Activated T-helper 2 cell treated with anti-CD3 and anti-CD28 coated beads, Interferon-gamma antibody, Interleukin-2, Interleukin-4, amounts not matched to agents 10 μg/mL and 5 μg/mL and 100 μg/mL, durations not matched to agents 14 hours and 24 hours and 36 hours (primary cell): ENCODE measurements at regions of chr17 and their contacts with region 1.

Region 1: DNA sequence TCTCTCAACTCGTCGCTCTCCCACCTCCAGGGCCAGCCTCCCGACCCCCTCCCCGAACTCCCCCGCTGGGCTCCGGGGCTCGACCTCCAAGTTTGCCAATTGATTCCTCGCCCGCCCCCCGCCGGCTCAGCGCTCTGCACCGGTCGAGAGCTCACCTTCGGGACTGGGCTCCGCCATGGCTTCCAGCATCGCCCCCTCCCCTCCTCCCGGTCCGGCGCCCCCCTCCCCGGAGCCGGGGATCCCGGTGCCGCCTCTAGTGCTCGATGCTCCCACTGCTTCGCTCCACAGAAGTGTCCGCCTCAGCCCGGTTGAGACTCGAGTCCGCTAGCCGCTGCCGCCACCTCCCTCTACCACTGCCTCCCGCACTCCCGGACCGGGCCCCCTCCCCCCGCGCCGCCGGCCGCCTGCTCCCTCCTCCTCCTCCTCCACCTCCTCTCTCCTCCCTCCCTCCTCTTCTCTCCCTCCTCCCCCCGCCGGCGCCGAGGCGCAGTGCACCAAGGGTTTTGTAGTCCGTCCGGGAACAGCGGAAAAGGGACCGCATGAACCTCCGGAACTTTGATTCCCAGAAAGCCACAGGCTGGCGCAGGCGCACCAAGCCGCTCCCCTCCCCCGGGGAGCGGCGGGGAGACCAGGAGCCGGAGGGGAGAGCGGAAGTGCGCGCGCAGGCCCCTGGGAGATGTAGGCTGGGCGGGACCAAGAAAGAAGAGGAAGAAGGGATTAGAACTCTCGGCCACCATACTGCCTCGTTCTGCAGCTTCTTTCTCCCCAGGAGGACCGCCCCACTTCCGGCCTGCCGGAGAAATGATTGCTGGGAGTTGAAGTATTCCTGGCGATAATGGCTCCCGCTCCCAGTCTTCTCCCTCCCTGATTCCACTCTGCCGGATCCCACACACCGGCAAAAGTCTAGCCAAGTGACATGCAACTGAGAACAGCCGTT is at the start of gene PHF23:
- DNase-seq: peak; percentile 98
- H3K4me3 Mint-ChIP-seq: peak within 1 kb of the TSS; percentile 98
- H3K27ac Mint-ChIP-seq: peak within 1 kb of the TSS; percentile 92
- H3K4me1 Mint-ChIP-seq: peaks cover 48% of the 10 kb centered on the region
- H3K27me3 Mint-ChIP-seq: no peaks in the 10 kb centered on the region
- total RNA-seq, gene PHF23: 43.4 and 47.8 TPM in 2 replicates

Region 2: DNA sequence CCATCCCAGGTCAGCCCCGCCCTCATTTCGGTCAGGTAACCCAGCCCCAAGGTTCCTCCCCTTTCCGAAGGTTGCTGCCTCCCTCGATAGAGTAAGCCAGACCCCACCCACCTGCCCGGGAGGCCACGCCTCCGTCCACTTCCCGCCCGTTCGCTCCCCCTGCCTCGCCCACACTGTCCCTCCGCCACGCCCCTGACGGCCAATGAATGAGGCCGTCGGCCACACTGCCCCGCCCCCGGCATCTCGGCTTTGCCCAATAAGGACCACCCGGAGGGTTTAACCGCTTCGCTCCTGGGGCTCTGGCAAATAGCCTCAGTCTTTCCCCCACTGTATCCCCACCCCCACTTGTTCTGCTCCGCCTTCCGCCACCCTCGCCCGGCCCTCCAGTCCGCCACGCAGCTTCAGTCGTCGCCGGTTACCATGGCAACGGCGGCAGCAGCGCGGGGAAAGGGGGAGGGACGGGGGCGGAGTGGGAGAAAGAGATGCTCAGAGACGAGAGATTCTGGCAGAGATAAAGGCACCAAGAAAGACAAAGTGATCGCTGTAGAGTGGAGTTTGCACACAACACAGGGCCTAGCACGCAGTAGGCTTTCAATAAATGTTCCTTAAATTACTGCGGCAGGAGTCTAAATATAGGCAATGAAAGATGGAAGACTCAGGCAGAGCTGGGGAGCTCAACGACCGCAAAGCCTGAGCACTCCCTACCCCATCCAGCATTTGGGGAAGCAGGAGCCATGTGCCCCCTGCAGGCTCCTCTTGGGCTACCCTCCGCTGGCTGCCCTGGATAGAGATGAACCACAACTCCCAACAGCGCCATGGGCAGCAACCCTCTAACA is 24.8 kb before region 1 on chr17:
- intact Hi-C with region 1: loop called (anchors 1 kb)
- DNase-seq: peak; percentile 99
- H3K4me3 Mint-ChIP-seq: peak overlapping the region; percentile 85
- H3K27ac Mint-ChIP-seq: peak overlapping the region; percentile 93
- H3K4me1 Mint-ChIP-seq: peaks cover 48% of the 10 kb centered on the region
- H3K27me3 Mint-ChIP-seq: peaks cover 15% of the 10 kb centered on the region

Region 3: GRCh38 chr17:7226723-7227396 is 12.5 kb before region 1 on chr17:
- intact Hi-C with region 1: no loop called
- DNase-seq: no peak
- H3K4me3 Mint-ChIP-seq: no peak overlapping the region
- H3K27ac Mint-ChIP-seq: no peak overlapping the region
- H3K4me1 Mint-ChIP-seq: peaks cover 6% of the 10 kb centered on the region
- H3K27me3 Mint-ChIP-seq: no peaks in the 10 kb centered on the region

Region 4: DNA sequence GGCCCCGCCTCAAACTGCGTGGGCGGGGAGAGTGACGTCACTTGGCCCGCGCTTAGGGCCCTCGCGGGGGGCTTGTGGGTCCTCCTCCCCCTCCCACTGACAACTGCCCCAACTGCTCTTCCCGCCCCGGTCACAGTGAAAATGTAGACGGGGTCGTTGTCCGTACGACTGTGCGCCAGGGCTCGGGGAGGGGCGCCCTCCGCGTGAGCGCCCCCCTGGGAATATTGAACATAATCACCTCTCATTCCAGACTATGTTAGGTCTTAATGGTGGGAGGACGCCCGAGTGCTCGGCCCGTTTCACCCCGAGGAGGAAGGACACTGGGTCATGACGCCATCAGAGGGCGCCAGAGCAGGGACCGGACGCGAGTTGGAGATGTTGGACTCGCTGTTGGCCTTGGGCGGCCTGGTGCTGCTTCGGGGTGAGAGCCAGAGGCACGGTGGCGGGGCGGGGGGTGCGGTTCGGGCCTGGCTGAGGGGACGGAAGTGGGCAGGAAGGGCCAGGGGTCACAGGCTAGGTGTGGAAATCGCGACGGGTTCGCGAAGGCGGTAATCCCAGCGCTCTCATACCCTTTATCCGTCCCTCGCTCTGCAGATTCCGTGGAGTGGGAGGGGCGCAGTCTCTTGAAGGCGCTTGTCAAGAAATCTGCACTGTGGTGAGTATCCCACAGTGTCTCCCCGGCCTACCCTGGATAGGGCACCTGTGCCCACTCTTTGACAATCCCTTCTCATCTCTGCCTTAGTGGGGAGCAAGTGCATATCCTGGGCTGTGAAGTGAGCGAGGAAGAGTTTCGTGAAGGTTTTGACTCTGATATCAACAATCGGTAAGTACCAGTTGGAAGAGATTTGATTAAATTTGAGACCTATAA is 13.1 kb after region 1 on chr17 and contains the start of gene ELP5:
- intact Hi-C with region 1: loop called (anchors 1 kb)
- DNase-seq: peak; percentile 88
- H3K4me3 Mint-ChIP-seq: peak within 1 kb of the TSS; percentile 92
- H3K27ac Mint-ChIP-seq: peak within 1 kb of the TSS; percentile 98
- H3K4me1 Mint-ChIP-seq: peaks cover 33% of the 10 kb centered on the region
- H3K27me3 Mint-ChIP-seq: no peaks in the 10 kb centered on the region
- total RNA-seq, gene ELP5: 64.8 and 65.3 TPM in 2 replicates

Region 5: GRCh38 chr17:7263083-7264078 is 24.0 kb after region 1 on chr17:
- intact Hi-C with region 1: no loop called
- DNase-seq: no peak
- H3K4me3 Mint-ChIP-seq: peak overlapping the region; percentile 47
- H3K27ac Mint-ChIP-seq: no peak overlapping the region
- H3K4me1 Mint-ChIP-seq: peaks cover 16% of the 10 kb centered on the region
- H3K27me3 Mint-ChIP-seq: peaks cover 29% of the 10 kb centered on the region

Region 6: GRCh38 chr17:7280519-7281429 is 41.4 kb after region 1 on chr17:
- intact Hi-C with region 1: loop called (anchors 1 kb)
- DNase-seq: peak; percentile 69
- H3K4me3 Mint-ChIP-seq: peak overlapping the region; percentile 78
- H3K27ac Mint-ChIP-seq: peak overlapping the region; percentile 42
- H3K4me1 Mint-ChIP-seq: peaks cover 15% of the 10 kb centered on the region
- H3K27me3 Mint-ChIP-seq: peaks cover 36% of the 10 kb centered on the region